ENCODE measurements at regions of chr1 and their contacts with region 1.

Region 1: GRCh38 chr1:24688621-24689195 is 45.6 kb downstream of the SRRM1 start:
- DNase-seq: peak; percentile 65
- H3K4me3 Mint-ChIP-seq: no peak overlapping the region
- H3K27ac Mint-ChIP-seq: no peak overlapping the region
- H3K4me1 Mint-ChIP-seq: peaks cover 9% of the 10 kb centered on the region
- H3K27me3 Mint-ChIP-seq: peaks cover 1% of the 10 kb centered on the region

Region 2: DNA sequence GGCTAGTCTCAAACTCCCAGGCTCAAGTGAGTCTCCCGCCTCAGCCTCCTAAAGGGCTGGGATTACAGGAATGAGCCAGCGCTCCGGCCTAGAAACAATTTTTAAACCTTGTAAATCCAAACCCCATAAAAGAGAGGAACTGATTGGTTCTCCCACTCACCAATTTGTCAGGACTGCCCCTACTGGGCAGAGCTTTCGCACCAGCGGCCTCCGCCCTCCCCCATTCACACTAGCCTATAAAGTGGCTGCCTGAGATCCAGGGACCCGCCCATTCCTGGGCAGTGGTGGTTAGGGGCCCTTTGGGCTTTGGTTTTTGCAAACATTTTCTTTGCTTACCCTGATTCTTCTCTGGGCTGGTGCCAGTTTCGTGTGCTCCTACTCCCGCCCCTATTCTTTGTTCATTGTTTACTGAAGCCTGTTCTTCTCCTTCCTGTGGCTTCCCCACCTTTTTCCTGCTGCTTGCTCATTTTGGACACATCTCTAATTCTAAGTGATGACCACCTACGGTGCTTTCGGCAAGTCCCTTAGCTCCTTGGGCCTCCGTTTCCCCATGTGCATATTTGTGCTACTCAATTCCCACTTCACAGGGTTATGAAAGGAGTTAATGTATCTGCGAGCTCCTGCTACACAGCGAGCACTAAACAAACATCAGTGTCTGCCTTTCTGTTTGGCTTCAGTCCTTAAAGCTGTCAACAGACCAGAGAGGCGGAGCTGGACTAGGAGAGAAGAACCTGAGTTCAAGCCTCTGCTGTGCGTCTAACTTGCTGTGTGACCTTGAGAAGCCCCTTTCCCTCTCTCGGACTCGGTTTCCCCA is 16.8 kb after region 1 on chr1:
- CTCF ChIA-PET with region 1: interaction called, 10 read pairs
- POLR2A ChIA-PET with region 1: interaction called, 3 read pairs
- DNase-seq: peak; percentile 59
- H3K4me3 Mint-ChIP-seq: no peak overlapping the region
- H3K27ac Mint-ChIP-seq: peak overlapping the region; percentile 75
- H3K4me1 Mint-ChIP-seq: peaks cover 44% of the 10 kb centered on the region
- H3K27me3 Mint-ChIP-seq: no peaks in the 10 kb centered on the region

Region 3: DNA sequence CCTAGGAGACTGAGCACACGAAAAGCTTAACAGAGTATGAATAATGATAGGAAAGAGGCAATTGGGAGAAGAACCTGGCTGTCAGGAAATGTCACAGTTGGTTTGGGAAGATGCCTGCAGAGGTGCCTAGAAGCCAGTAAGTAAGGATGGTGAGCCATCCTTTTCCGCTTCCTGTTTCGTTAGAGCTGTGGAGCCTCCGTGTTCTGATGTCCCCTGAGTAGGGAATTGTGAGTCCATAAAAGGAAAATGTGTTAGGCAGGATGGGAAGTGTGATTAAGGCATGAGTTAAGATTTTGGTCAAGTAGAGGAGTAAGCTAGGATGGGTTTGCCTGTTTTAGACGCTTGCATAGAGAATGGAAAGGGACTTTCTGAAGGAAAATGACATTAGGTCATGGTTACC is 65.5 kb after region 1 on chr1:
- CTCF ChIA-PET with region 1: interaction called, 10 read pairs
- POLR2A ChIA-PET with region 1: no interaction called
- DNase-seq: no peak
- H3K4me3 Mint-ChIP-seq: no peak overlapping the region
- H3K27ac Mint-ChIP-seq: no peak overlapping the region
- H3K4me1 Mint-ChIP-seq: peaks cover under 1% of the 10 kb centered on the region
- H3K27me3 Mint-ChIP-seq: peaks cover 3% of the 10 kb centered on the region

Region 4: DNA sequence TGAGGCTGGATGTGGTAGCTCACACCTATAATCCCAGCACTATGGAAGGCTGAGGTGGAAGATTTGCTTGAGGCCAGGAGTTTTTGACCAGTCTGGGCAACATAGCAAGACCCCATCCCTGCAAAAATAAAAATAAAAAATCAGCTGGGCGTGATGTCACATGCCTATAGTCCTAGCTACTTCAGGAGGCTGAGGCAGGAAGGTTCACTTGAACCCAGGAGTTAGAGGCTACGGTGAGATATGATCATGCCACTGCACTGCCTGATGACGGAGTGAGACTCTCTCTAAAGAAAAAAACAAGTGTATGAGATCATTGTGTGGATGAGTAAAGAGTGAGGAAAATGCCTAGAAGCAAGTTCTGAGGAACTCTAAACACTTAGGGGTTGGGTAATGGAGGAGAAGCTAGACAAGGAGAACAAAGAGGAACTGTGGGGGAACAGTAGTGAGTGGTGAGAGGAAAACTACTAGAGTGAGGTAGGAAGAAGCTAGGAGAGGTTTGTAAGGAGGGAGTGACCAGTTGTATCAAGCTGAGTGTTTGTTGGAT is 73.5 kb after region 1 on chr1:
- CTCF ChIA-PET with region 1: interaction called, 11 read pairs
- POLR2A ChIA-PET with region 1: no interaction called
- DNase-seq: no peak
- H3K4me3 Mint-ChIP-seq: no peak overlapping the region
- H3K27ac Mint-ChIP-seq: no peak overlapping the region
- H3K4me1 Mint-ChIP-seq: no peaks in the 10 kb centered on the region
- H3K27me3 Mint-ChIP-seq: peaks cover 2% of the 10 kb centered on the region

Region 5: DNA sequence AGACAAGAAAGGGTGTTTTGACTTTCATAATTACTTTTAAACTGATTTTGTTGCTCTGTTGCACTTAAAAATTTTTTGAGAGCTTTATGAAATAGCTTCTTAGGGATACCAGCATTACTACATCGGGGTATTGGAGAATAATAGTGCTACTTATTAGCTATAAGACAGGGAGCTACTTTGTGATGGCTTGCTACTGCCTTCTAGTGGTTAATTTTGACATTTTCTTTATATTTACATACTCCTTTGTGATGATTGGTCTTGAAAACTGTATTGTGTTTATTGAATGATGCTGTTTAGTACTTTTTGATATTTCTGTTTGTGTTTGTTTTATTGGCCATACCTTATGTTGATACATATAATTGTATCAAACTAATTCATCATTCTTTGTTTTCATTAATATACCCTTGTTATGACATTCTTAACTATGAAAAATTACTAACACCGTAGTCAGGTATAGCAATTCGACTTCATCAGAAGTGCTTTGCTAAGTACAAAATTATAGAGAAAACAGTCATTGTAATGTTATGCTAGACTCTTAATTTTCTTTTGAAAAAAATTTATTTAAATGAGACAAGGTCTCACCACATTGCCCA is 142.1 kb after region 1 on chr1:
- CTCF ChIA-PET with region 1: interaction called, 296 read pairs
- POLR2A ChIA-PET with region 1: interaction called, 18 read pairs
- DNase-seq: no peak
- H3K4me3 Mint-ChIP-seq: no peak overlapping the region
- H3K27ac Mint-ChIP-seq: no peak overlapping the region
- H3K4me1 Mint-ChIP-seq: peaks cover 1% of the 10 kb centered on the region
- H3K27me3 Mint-ChIP-seq: no peaks in the 10 kb centered on the region

Measured in activated CD4-positive, alpha-beta memory T cell treated with anti-CD3 and anti-CD28 coated beads, Interleukin-2, amount 10 ng/mL, durations not matched to agents 7 days and 5 days (primary cell).